ENCODE measurements at regions of chr20 and their contacts with region 1.

Region 1: GRCh38 chr20:64062596-64063388 is at the start of gene TCEA2:
- DNase-seq: peak; percentile 85 to 95 (median 90)
- ATAC-seq: peak; percentile 97
- H3K4me3 ChIP-seq: peak within 1 kb of the TSS; percentile 56
- H3K4me3 Mint-ChIP-seq: peak within 1 kb of the TSS; percentile 83 to 95 (median 88)
- H3K27ac ChIP-seq: peak within 1 kb of the TSS; percentile 74
- H3K27ac Mint-ChIP-seq: peak within 1 kb of the TSS; percentile 69 to 95 (median 79)
- H3K4me1 ChIP-seq: peaks cover 23 to 40% of the 10 kb centered on the region in 2 donors
- H3K4me1 Mint-ChIP-seq: peaks cover 30 to 54% (median 37%) of the 10 kb centered on the region in 7 donors
- H3K27me3 ChIP-seq: no peaks in the 10 kb centered on the region
- H3K27me3 Mint-ChIP-seq: no peaks in the 10 kb centered on the region
- total RNA-seq, gene TCEA2: 35.5 to 73.2 (median 47.3) TPM

Region 2: GRCh38 chr20:63216041-63216848 is 846.5 kb before region 1 on chr20 and contains the start of gene YTHDF1:
- CTCF ChIA-PET with region 1: no interaction called
- POLR2A ChIA-PET with region 1: no interaction called
- intact Hi-C with region 1: loop called in 1 of 2 experiments (anchors 2 kb)
- DNase-seq: peak; percentile 93 to 98 (median 96)
- ATAC-seq: peak; percentile 97
- H3K4me3 ChIP-seq: peak within 1 kb of the TSS; percentile 78
- H3K4me3 Mint-ChIP-seq: peak within 1 kb of the TSS; percentile 88 to 97 (median 92)
- H3K27ac ChIP-seq: peak within 1 kb of the TSS; percentile 95
- H3K27ac Mint-ChIP-seq: peak within 1 kb of the TSS; percentile 86 to 96 (median 91)
- H3K4me1 ChIP-seq: peaks cover 10 to 39% of the 10 kb centered on the region in 2 donors
- H3K4me1 Mint-ChIP-seq: peaks cover 34 to 49% (median 46%) of the 10 kb centered on the region in 7 donors
- H3K27me3 ChIP-seq: no peaks in the 10 kb centered on the region
- H3K27me3 Mint-ChIP-seq: peaks cover 0 to 6% (median 0%) of the 10 kb centered on the region in 5 donors
- total RNA-seq, gene YTHDF1: 35.9 to 52.1 (median 42.0) TPM

Region 3: DNA sequence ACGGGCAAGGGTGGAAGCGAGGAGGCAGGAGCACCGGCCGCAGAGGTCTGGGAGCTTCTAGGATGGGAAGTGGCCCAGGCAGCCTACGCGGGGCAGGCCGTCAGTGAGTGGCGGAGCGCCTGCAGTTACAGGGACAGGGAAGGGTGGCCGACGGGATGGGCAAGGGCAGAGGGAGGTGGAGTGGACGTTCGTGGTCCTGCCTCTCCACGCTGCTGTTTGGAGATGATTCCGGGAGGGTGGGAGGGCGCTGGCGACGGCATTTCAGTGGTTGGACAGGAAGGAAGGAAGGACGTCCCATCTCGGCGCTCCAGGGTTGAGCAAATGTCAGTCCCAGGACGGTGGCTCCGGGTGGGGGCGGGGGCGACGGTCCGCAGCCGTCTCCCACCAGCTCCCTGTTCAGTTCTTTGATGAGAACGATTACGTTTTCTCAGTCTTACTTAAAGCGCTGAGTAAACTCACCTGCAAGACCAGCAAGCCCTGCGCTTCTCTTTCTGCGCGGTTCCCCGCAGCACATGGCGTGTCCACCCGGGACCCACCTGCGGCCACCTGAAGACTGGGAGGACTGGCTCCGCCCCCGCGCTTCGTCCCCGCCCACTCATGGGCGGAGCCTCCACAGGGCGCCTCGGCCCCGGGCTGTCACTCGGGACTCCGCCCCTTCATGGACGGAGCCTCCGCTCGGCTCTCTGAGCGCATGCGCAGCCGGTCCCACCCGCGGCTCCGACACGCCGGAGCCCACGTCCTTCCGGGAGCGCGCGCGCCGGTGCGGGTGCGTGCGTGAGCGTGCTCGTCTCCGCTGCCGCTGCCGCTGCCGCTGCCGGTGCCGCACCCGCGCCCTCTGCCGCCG is 168.2 kb before region 1 on chr20 and contains the start of gene DNAJC5:
- CTCF ChIA-PET with region 1: no interaction called
- POLR2A ChIA-PET with region 1: no interaction called
- intact Hi-C with region 1: loop called (anchors 1 to 10 kb)
- DNase-seq: peak; percentile 96 to 99 (median 98)
- ATAC-seq: peak; percentile 95
- H3K4me3 ChIP-seq: peak within 1 kb of the TSS; percentile 56
- H3K4me3 Mint-ChIP-seq: peak within 1 kb of the TSS; percentile 86 to 99 (median 96)
- H3K27ac ChIP-seq: peak within 1 kb of the TSS; percentile 94
- H3K27ac Mint-ChIP-seq: peak within 1 kb of the TSS; percentile 94 to 98 (median 97)
- H3K4me1 ChIP-seq: peaks cover 21% of the 10 kb centered on the region in 2 donors
- H3K4me1 Mint-ChIP-seq: peaks cover 34 to 49% (median 43%) of the 10 kb centered on the region in 7 donors
- H3K27me3 ChIP-seq: no peaks in the 10 kb centered on the region
- H3K27me3 Mint-ChIP-seq: peaks cover 0 to 2% (median 0%) of the 10 kb centered on the region in 5 donors
- total RNA-seq, gene DNAJC5: 35.5 to 56.8 (median 50.3) TPM

Region 4: DNA sequence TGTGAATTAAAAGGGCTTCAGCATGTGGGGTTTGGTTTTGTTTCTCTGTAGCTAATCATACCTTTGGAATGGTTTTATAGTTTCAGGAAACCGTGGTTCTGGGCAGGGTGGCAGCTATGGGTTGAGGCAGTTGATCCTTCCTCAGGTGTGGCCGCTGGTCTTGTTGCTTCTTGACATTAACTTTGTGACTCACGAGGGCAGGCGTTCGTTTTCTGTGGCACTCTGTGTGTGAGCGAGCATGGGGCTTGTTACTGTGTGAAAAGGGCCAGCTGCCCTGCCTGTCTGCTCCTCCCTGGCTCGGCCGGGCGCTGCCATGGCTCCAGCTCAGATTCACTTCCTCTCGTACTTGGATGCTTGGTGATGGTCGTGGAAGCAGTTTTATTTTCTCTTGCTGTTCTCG is 151.6 kb before region 1 on chr20:
- CTCF ChIA-PET with region 1: no interaction called
- POLR2A ChIA-PET with region 1: no interaction called
- intact Hi-C with region 1: loop called in 1 of 2 experiments (anchors 1 kb)
- DNase-seq: no peak
- ATAC-seq: peak; percentile 53
- H3K4me3 ChIP-seq: no peak overlapping the region
- H3K4me3 Mint-ChIP-seq: peak overlapping the region in 4 of 10 donors; percentile 3 to 59 (median 30)
- H3K27ac ChIP-seq: no peak overlapping the region
- H3K27ac Mint-ChIP-seq: peak overlapping the region in 6 of 9 donors; percentile 3 to 78 (median 44)
- H3K4me1 ChIP-seq: peaks cover 7 to 17% of the 10 kb centered on the region in 2 donors
- H3K4me1 Mint-ChIP-seq: peaks cover 28 to 63% (median 41%) of the 10 kb centered on the region in 7 donors
- H3K27me3 ChIP-seq: no peaks in the 10 kb centered on the region
- H3K27me3 Mint-ChIP-seq: no peaks in the 10 kb centered on the region

Region 5: DNA sequence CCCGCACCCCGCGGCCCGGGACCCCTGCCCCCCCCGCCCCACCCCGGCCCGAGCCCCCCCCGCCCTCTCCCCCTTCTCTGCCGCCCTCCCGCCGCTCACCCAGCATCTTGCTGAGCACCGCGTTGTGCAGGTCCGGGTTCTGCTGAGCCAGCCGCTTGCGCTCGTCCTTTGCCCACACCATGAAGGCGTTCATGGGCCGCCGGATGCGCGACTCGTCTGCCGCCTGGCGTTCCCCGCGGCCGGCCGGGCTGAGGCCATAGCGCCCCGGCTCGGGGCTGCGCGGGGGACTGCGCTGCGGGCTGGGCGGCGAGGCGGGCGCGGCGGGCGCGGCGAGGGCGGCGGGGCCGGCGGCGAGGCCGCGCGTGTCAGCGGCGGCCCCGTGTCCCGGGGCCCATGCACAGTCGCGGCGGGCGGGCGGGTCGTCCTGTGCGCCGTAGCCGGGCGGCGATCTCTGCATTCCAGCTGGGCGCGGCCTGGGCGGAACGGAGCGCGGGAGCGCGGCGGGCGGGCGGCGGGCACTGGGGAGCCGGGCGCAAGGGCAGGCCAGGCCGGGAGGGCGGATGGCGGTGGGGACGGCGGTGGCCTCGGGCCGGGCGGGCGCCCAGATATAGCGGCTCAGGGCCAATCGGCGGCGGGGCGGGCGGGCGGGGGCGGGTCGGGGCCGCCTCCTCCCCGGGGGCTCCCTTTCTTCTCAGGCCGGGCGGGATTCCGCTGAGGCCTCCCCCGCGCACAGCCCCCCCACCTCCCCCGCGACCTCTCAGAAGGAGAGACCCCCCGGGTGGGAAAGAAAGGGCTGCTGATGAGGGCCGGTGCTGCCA is 13.5 kb before region 1 on chr20 and contains the start of gene SOX18:
- CTCF ChIA-PET with region 1: interaction called, 3 read pairs
- POLR2A ChIA-PET with region 1: interaction called, 5 read pairs
- intact Hi-C with region 1: loop called in 1 of 2 experiments (anchors 1 kb)
- DNase-seq: no peak
- ATAC-seq: peak; percentile 49
- H3K4me3 ChIP-seq: no peak within 1 kb of the TSS
- H3K4me3 Mint-ChIP-seq: peak within 1 kb of the TSS in 7 of 10 donors; percentile 46 to 82 (median 61)
- H3K27ac ChIP-seq: no peak within 1 kb of the TSS
- H3K27ac Mint-ChIP-seq: no peak within 1 kb of the TSS
- H3K4me1 ChIP-seq: peaks cover 0 to 8% of the 10 kb centered on the region in 2 donors
- H3K4me1 Mint-ChIP-seq: peaks cover 13 to 19% (median 16%) of the 10 kb centered on the region in 7 donors
- H3K27me3 ChIP-seq: peaks cover 6 to 22% of the 10 kb centered on the region in 2 donors
- H3K27me3 Mint-ChIP-seq: peaks cover 6 to 45% (median 17%) of the 10 kb centered on the region in 5 donors
- total RNA-seq, gene SOX18: 0.20 to 1.7 TPM in 2 of 5 experiments, not detected in the others

Region 6: GRCh38 chr20:64091770-64092169 is 29.0 kb after region 1 on chr20:
- CTCF ChIA-PET with region 1: no interaction called
- POLR2A ChIA-PET with region 1: no interaction called
- intact Hi-C with region 1: no loop called
- DNase-seq: no peak
- ATAC-seq: peak; percentile 7
- H3K4me3 ChIP-seq: no peak overlapping the region
- H3K4me3 Mint-ChIP-seq: peak overlapping the region in 1 of 10 donors; percentile 36
- H3K27ac ChIP-seq: no peak overlapping the region
- H3K27ac Mint-ChIP-seq: no peak overlapping the region
- H3K4me1 ChIP-seq: no peaks in the 10 kb centered on the region
- H3K4me1 Mint-ChIP-seq: peaks cover 0 to 10% (median 3%) of the 10 kb centered on the region in 7 donors
- H3K27me3 ChIP-seq: no peaks in the 10 kb centered on the region
- H3K27me3 Mint-ChIP-seq: peaks cover 0 to 8% (median 0%) of the 10 kb centered on the region in 5 donors